A549 (cell line): ENCODE measurements at regions of chr10 and their contacts with region 1.

Region 1: DNA sequence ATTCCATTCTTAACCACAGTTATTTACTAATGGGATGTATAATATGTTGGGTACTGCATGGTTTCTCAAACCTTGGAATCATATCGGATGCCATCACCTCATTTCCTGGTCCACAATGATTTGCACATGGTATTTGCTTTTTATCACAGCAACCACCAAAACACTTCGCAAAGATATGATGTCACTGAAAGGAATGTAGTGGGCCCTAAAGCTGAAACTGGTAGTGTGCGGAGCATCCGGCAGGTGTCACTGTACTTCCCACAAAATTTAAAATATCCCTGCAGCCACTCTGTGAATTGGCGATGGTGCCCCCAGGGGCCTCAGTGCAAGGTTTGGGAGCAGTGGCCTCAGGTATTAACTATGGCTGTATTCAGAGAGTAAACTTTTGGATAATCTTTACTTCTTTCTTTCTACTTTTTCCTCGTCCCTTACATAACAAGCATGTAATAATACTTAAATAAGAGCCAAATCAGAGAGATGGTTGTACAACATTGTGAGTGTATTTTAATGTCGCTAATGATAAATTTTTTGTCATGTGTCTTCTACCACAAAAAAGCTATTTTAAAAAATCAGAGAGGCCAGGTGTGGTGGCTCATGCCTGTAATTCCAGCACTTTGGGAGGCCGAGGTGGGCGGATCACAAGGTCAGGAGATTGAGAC is 66.2 kb downstream of the FAM241B start:
- DNase-seq: peak; percentile 84 to 90
- ATAC-seq: peak; percentile 94
- H3K4me3 ChIP-seq: no peak overlapping the region
- H3K27ac ChIP-seq: no peak overlapping the region
- H3K4me1 ChIP-seq: 0 out of 3 replicates have a peak, but pooled peaks cover 3% of the 10 kb centered on the region
- CTCF ChIP-seq: peak; percentile 83
- EP300 ChIP-seq: no peak
- POLR2A ChIP-seq: no peak
- RAD21 ChIP-seq: peak; percentile 62 to 67

Region 2: DNA sequence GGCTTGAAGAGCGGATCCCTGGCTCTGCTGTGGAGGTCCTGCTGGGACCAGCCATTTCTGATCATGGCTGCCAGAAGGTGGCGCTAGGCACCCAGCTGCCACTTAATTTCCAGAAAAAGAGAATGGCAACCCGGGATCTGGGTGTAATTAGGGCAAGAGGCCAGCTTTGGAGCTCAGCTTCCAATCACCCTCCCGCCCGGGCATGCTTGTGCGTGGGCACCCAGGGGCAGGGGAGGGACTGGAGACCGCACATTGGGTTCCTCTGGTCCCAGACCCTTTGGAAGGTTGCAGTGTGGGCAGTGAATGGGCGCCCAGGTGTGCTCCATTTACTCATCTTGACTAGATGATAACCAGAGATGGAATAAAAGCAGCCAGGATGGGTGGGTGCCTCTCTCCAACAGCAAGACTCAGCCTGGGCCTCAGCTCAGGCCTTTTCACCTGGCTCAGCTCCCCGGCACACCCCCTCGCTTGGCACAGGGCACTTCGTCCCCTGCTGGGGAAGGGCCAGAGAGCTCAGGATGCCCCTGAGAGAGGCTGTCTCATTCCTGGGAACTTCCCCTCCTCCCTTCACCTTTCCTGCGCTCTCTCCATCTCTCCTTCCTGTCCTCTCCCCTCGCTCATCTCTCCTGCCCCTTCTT is 51.4 kb before region 1 on chr10:
- CTCF ChIA-PET with region 1: interaction called, 20 read pairs
- POLR2A ChIA-PET with region 1: no interaction called
- DNase-seq: peak; percentile 48 to 90
- ATAC-seq: peak; percentile 49 to 89; a peak in 5 of 6 replicates
- H3K4me3 ChIP-seq: no peak overlapping the region
- H3K27ac ChIP-seq: no peak overlapping the region
- H3K4me1 ChIP-seq: no peaks in the 10 kb centered on the region
- CTCF ChIP-seq: peak; percentile 83
- EP300 ChIP-seq: no peak
- POLR2A ChIP-seq: no peak
- RAD21 ChIP-seq: peak; percentile 84 to 93

Region 3: DNA sequence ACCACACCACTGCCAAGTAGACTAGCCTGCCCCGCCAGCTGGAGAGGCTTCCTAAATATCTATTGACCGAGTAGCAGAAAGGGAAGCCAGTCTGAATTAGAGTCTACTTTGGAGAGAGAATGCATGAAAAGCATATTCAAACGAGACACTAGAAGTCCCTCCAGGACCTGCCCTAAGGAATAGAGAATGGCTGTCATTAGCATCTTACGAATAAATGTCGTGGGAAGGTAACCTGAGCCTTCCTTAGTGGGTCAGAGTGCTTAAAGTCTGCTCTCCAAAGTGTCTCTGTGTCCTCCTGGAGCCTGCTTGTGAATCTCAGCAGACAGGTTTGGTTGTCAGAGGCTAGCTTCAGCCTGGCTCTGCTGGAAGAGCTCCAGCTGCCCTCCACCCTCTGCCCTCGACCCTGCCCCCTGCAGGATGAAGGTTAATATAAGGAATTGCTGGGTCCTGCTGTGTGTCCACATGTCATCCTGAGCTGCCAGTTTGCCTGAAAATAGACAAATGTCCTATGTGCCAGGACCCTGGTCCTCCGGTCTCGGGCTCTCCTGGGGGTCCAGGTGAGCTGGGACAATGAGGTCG is 32.7 kb before region 1 on chr10:
- CTCF ChIA-PET with region 1: interaction called, 14 read pairs
- POLR2A ChIA-PET with region 1: no interaction called
- DNase-seq: peak in 1 of 2 experiments; percentile 58
- ATAC-seq: peak; percentile 21 to 70; a peak in 4 of 6 replicates
- H3K4me3 ChIP-seq: no peak overlapping the region
- H3K27ac ChIP-seq: no peak overlapping the region
- H3K4me1 ChIP-seq: no peaks in the 10 kb centered on the region
- CTCF ChIP-seq: no peak
- EP300 ChIP-seq: no peak
- POLR2A ChIP-seq: no peak
- RAD21 ChIP-seq: no peak

Region 4: DNA sequence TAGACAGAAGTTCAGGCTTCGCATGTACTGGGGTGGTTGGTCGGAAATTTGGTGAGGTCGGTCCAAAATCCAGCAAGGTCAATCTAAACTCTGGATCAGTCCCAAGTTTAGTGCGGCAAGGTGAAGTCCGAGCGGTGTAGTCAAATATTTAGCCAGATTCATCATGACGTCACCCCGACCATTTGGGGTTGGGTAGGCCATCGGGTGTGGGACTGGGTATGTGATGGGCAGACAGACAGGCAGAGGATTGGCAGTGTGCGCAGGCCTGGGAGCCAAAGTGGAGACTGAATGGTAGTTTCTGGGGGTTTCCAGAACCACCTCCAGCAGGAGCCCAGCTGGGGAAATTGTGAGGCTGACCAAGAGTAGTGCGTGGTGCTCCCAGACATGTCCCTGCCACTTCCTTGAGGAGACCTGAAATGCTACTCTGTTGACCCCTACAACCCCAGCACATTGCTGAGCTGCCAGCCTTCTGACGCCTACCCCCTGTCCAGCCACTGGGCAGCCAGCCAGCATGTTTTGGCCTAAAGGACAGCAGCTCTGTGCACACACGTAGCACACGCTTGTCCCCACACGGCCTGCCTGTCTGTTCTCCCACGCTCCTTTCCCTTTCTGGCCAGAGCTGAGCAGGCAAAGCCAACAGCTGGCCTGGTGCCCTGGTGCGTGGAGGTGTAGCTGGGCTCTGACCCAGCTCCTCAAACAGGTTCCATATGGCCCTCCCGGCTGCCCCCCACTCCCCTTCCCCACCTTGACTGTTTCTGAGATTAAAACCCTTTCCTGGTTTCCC is 10.2 kb before region 1 on chr10:
- CTCF ChIA-PET with region 1: interaction called, 20 read pairs
- POLR2A ChIA-PET with region 1: no interaction called
- DNase-seq: no peak
- ATAC-seq: no peak
- H3K4me3 ChIP-seq: no peak overlapping the region
- H3K27ac ChIP-seq: no peak overlapping the region
- H3K4me1 ChIP-seq: no peaks in the 10 kb centered on the region
- CTCF ChIP-seq: no peak
- EP300 ChIP-seq: no peak
- POLR2A ChIP-seq: no peak
- RAD21 ChIP-seq: no peak

Region 5: DNA sequence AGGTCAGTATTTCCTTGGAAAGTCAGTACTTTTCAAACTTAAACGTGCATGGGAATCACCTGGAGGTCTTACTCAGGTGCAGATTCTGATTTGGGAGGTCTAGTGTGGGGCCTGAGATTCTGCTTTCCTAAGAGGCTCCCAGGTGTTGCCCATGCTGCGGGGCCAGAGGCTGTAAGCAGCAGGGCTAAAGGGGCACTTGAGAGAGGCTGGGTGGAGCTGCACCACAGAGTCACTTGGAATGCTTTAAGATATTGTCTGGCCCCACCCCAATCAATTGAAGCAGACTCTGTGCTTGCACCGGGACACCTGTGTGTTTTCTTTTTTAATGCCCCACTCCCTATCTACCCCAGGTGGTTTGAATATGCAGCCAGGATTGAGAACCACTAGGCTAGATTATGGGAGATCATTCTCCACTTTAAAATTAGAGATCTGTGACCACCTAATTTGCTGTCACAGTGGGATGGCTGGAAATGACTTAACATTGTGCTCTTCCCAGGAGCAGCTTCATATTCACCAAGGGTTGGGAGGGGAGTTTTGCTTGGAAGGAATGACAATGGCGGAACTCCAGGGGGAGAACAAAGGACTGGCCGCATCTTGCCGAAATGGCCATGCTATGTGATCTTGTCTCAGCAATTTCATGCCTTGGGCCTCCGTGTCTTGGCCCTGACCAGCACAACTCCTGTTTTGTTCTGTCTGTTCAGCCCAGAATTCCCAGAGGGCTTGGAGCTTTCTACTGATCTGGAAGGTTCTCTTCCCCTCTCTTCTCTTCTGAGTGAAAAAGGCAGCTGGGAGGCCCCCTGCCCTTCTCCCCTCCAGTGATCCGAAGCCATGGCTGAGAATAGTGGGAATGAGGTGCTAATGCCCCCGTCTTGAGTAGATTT is 14.0 kb after region 1 on chr10:
- CTCF ChIA-PET with region 1: interaction called, 41 read pairs
- POLR2A ChIA-PET with region 1: no interaction called
- DNase-seq: no peak
- ATAC-seq: no peak
- H3K4me3 ChIP-seq: no peak overlapping the region
- H3K27ac ChIP-seq: no peak overlapping the region
- H3K4me1 ChIP-seq: no peaks in the 10 kb centered on the region
- CTCF ChIP-seq: no peak
- EP300 ChIP-seq: no peak
- POLR2A ChIP-seq: no peak
- RAD21 ChIP-seq: no peak